ENCODE measurements at regions of chr2 and their contacts with region 1.

Region 1: DNA sequence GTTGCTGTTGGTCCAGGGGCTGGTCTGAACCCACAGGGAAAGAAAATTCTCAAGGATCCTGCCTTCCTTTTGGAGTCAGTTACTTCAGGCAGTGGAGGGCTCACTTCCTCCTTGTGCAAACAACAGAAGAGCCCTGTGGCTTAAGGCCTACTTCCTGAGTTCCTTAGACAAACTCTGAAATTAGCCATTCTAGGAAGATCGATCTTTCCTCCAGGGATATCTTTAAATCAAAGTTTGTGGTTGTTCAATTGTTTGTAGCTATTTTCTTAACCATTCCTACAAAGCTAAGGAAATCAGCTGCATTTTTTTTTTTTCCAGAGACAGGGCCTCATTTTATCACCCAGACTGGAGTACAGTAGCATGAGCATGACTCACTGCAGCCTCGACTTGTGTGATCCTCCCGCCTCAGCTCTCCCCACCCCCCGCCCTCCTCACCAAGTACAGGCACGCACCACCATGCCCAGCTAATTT is 156.0 kb downstream of the TANC1 start:
- DNase-seq: no peak
- H3K4me3 ChIP-seq: no peak overlapping the region
- H3K27ac ChIP-seq: peak overlapping the region in 1 of 3 donors; percentile 50
- H3K4me1 ChIP-seq: peaks cover 12 to 16% of the 10 kb centered on the region in 2 donors
- H3K27me3 ChIP-seq: no peaks in the 10 kb centered on the region
- CTCF ChIP-seq: no peak
- POLR2A ChIP-seq: no peak

Region 2: GRCh38 chr2:158903711-158904443 is 220.6 kb before region 1 on chr2:
- intact Hi-C with region 1: loop called (anchors 5 kb)
- DNase-seq: no peak
- H3K4me3 ChIP-seq: no peak overlapping the region
- H3K27ac ChIP-seq: no peak overlapping the region
- H3K4me1 ChIP-seq: no peaks in the 10 kb centered on the region
- H3K27me3 ChIP-seq: no peaks in the 10 kb centered on the region
- CTCF ChIP-seq: no peak
- POLR2A ChIP-seq: no peak

Region 3: GRCh38 chr2:159349674-159350299 is 225.3 kb after region 1 on chr2:
- intact Hi-C with region 1: no loop called
- DNase-seq: no peak
- H3K4me3 ChIP-seq: no peak overlapping the region
- H3K27ac ChIP-seq: no peak overlapping the region
- H3K4me1 ChIP-seq: no peaks in the 10 kb centered on the region
- H3K27me3 ChIP-seq: no peaks in the 10 kb centered on the region
- CTCF ChIP-seq: no peak
- POLR2A ChIP-seq: no peak

Measured in thyroid gland (tissue), 4 donors.